ENCODE measurements at regions of chr12 and their contacts with region 1.

Region 1: GRCh38 chr12:111451649-111452129 is 46.0 kb downstream of the SH2B3 start:
- DNase-seq: peak; percentile 46
- ATAC-seq: peak; percentile 35
- H3K4me3 Mint-ChIP-seq: no peak overlapping the region
- H3K27ac Mint-ChIP-seq: peak overlapping the region; percentile 56
- H3K4me1 Mint-ChIP-seq: peaks cover 53% of the 10 kb centered on the region
- H3K27me3 Mint-ChIP-seq: no peaks in the 10 kb centered on the region

Region 2: DNA sequence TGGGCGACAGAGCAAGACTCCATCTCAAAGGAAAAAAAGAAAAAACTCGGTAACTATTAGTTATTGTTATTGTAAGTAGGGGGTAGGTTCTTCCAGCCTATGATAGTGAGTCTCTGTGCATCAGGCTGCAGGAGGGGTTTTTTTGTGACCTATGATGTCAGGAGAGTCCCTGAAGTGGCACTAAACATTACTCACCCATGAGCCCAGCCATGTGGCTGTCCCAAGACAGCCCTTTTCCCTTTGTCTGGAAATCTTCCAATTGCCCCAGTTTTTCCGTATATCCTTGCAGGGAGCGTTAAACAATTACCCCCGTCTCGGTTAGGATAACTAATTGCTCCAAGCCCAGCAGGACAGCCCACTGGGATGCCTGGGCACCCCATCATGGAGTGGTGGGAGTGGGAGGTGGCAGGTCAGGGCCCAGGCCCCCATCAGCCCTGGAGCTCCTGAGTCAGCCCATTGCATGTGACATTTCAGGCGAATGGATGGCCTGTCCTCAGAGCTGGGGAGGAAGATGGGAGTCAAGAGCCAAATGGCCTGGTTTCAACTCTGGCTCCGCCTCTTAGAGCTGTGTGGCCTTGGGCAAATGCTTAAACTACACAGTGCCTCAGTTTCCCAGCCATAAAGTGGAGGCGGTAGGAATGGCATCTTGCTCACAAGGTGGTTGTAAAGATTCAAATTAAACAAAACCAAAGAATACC is 99.2 kb before region 1 on chr12:
- CTCF ChIA-PET with region 1: no interaction called
- POLR2A ChIA-PET with region 1: no interaction called
- DNase-seq: no peak
- ATAC-seq: no peak
- H3K4me3 Mint-ChIP-seq: no peak overlapping the region
- H3K27ac Mint-ChIP-seq: no peak overlapping the region
- H3K4me1 Mint-ChIP-seq: no peaks in the 10 kb centered on the region
- H3K27me3 Mint-ChIP-seq: no peaks in the 10 kb centered on the region

Region 3: GRCh38 chr12:111384596-111384995 is 67.1 kb before region 1 on chr12:
- CTCF ChIA-PET with region 1: interaction called, 10 read pairs
- POLR2A ChIA-PET with region 1: no interaction called
- DNase-seq: no peak
- ATAC-seq: no peak
- H3K4me3 Mint-ChIP-seq: no peak overlapping the region
- H3K27ac Mint-ChIP-seq: no peak overlapping the region
- H3K4me1 Mint-ChIP-seq: no peaks in the 10 kb centered on the region
- H3K27me3 Mint-ChIP-seq: peaks cover 6% of the 10 kb centered on the region

Region 4: GRCh38 chr12:111434680-111435338 is 16.9 kb before region 1 on chr12:
- CTCF ChIA-PET with region 1: interaction called, 170 read pairs
- POLR2A ChIA-PET with region 1: interaction called, 16 read pairs
- DNase-seq: peak; percentile 89
- ATAC-seq: peak; percentile 66
- H3K4me3 Mint-ChIP-seq: peak overlapping the region; percentile 75
- H3K27ac Mint-ChIP-seq: peak overlapping the region; percentile 99
- H3K4me1 Mint-ChIP-seq: peaks cover 97% of the 10 kb centered on the region
- H3K27me3 Mint-ChIP-seq: no peaks in the 10 kb centered on the region

Region 5: GRCh38 chr12:111482462-111482861 is 30.8 kb after region 1 on chr12:
- CTCF ChIA-PET with region 1: interaction called, 15 read pairs
- POLR2A ChIA-PET with region 1: no interaction called
- DNase-seq: no peak
- ATAC-seq: no peak
- H3K4me3 Mint-ChIP-seq: no peak overlapping the region
- H3K27ac Mint-ChIP-seq: no peak overlapping the region
- H3K4me1 Mint-ChIP-seq: peaks cover 4% of the 10 kb centered on the region
- H3K27me3 Mint-ChIP-seq: no peaks in the 10 kb centered on the region

Region 6: GRCh38 chr12:111529424-111530368 is 78.0 kb after region 1 on chr12:
- CTCF ChIA-PET with region 1: interaction called, 35 read pairs
- POLR2A ChIA-PET with region 1: no interaction called
- DNase-seq: peak; percentile 73
- ATAC-seq: peak; percentile 89
- H3K4me3 Mint-ChIP-seq: no peak overlapping the region
- H3K27ac Mint-ChIP-seq: no peak overlapping the region
- H3K4me1 Mint-ChIP-seq: peaks cover 3% of the 10 kb centered on the region
- H3K27me3 Mint-ChIP-seq: no peaks in the 10 kb centered on the region